CD4-positive, alpha-beta memory T cell (primary cell): ENCODE measurements at regions of chr15 and their contacts with region 1.

Region 1: GRCh38 chr15:40906091-40906990 is 12.1 kb downstream of the VPS18 start:
- DNase-seq: peak; percentile 64 to 68 (median 64)
- H3K4me3 ChIP-seq: peak overlapping the region; percentile 61 to 67
- H3K4me3 Mint-ChIP-seq: peak overlapping the region; percentile 42 to 88 (median 84)
- H3K27ac ChIP-seq: peak overlapping the region; percentile 58
- H3K27ac Mint-ChIP-seq: peak overlapping the region in 5 of 7 donors; percentile 70 to 91 (median 87)
- H3K4me1 ChIP-seq: peaks cover 20% of the 10 kb centered on the region
- H3K4me1 Mint-ChIP-seq: peaks cover 13 to 35% (median 24%) of the 10 kb centered on the region in 4 donors
- H3K27me3 ChIP-seq: no peaks in the 10 kb centered on the region
- H3K27me3 Mint-ChIP-seq: no peaks in the 10 kb centered on the region

Region 2: GRCh38 chr15:40536501-40536900 is 369.8 kb before region 1 on chr15:
- CTCF ChIA-PET with region 1: no interaction called
- POLR2A ChIA-PET with region 1: no interaction called
- intact Hi-C with region 1: no loop called
- DNase-seq: no peak
- H3K4me3 ChIP-seq: no peak overlapping the region
- H3K4me3 Mint-ChIP-seq: no peak overlapping the region
- H3K27ac ChIP-seq: no peak overlapping the region
- H3K27ac Mint-ChIP-seq: peak overlapping the region in 1 of 7 donors; percentile 42
- H3K4me1 ChIP-seq: no peaks in the 10 kb centered on the region
- H3K4me1 Mint-ChIP-seq: peaks cover 0 to 2% (median 0%) of the 10 kb centered on the region in 4 donors
- H3K27me3 ChIP-seq: no peaks in the 10 kb centered on the region
- H3K27me3 Mint-ChIP-seq: no peaks in the 10 kb centered on the region

Region 3: DNA sequence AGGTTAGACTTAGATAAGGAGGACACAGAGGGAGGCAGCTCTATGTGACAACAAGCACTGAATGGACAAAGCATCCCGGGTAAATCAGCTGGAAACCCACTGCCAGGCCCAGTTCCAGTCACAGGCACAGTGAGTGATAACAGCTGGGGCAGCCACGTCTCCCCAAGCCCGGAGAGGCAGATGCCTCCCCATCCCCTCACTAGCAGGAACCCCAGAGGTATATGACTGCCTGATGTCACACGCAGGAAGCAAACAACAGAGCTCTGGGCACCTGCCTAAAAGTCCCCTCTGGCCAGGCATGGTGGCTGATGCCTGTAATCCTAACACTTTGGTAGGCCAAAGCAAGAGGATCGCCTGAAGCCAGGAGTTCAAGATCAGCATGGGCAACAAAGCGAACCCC is 118.3 kb before region 1 on chr15:
- CTCF ChIA-PET with region 1: no interaction called
- POLR2A ChIA-PET with region 1: no interaction called
- intact Hi-C with region 1: no loop called
- DNase-seq: no peak
- H3K4me3 ChIP-seq: no peak overlapping the region
- H3K4me3 Mint-ChIP-seq: peak overlapping the region in 3 of 8 donors; percentile 45 to 68 (median 53)
- H3K27ac ChIP-seq: no peak overlapping the region
- H3K27ac Mint-ChIP-seq: peak overlapping the region in 3 of 7 donors; percentile 12 to 83 (median 75)
- H3K4me1 ChIP-seq: peaks cover 23% of the 10 kb centered on the region
- H3K4me1 Mint-ChIP-seq: peaks cover 20 to 34% (median 25%) of the 10 kb centered on the region in 4 donors
- H3K27me3 ChIP-seq: no peaks in the 10 kb centered on the region
- H3K27me3 Mint-ChIP-seq: no peaks in the 10 kb centered on the region

Region 4: GRCh38 chr15:40928821-40929659 is 22.7 kb after region 1 on chr15 and contains the start of gene DLL4:
- CTCF ChIA-PET with region 1: interaction called, 7 read pairs
- POLR2A ChIA-PET with region 1: interaction called, 4 read pairs
- intact Hi-C with region 1: loop called (anchors 2 kb)
- DNase-seq: peak in 4 of 5 donors; percentile 21 to 49 (median 38)
- H3K4me3 ChIP-seq: peak within 1 kb of the TSS; percentile 42 to 57
- H3K4me3 Mint-ChIP-seq: peak within 1 kb of the TSS; percentile 77 to 92 (median 84)
- H3K27ac ChIP-seq: no peak within 1 kb of the TSS
- H3K27ac Mint-ChIP-seq: peak within 1 kb of the TSS in 1 of 7 donors; percentile 65
- H3K4me1 ChIP-seq: peaks cover 52% of the 10 kb centered on the region
- H3K4me1 Mint-ChIP-seq: peaks cover 23 to 62% (median 34%) of the 10 kb centered on the region in 4 donors
- H3K27me3 ChIP-seq: peaks cover 33% of the 10 kb centered on the region
- H3K27me3 Mint-ChIP-seq: peaks cover 46 to 54% of the 10 kb centered on the region in 2 donors
- total RNA-seq, gene DLL4: not detected

Region 5: GRCh38 chr15:41022487-41023090 is 116.2 kb after region 1 on chr15:
- CTCF ChIA-PET with region 1: interaction called, 81 read pairs
- POLR2A ChIA-PET with region 1: interaction called, 3 read pairs
- intact Hi-C with region 1: loop called (anchors 1 kb)
- DNase-seq: peak; percentile 33 to 59 (median 37)
- H3K4me3 ChIP-seq: no peak overlapping the region
- H3K4me3 Mint-ChIP-seq: no peak overlapping the region
- H3K27ac ChIP-seq: no peak overlapping the region
- H3K27ac Mint-ChIP-seq: peak overlapping the region in 1 of 7 donors; percentile 29
- H3K4me1 ChIP-seq: no peaks in the 10 kb centered on the region
- H3K4me1 Mint-ChIP-seq: peaks cover 1 to 7% (median 2%) of the 10 kb centered on the region in 4 donors
- H3K27me3 ChIP-seq: no peaks in the 10 kb centered on the region
- H3K27me3 Mint-ChIP-seq: no peaks in the 10 kb centered on the region

Region 6: GRCh38 chr15:41043276-41043951 is 137.1 kb after region 1 on chr15:
- CTCF ChIA-PET with region 1: no interaction called
- POLR2A ChIA-PET with region 1: no interaction called
- intact Hi-C with region 1: no loop called
- DNase-seq: no peak
- H3K4me3 ChIP-seq: no peak overlapping the region
- H3K4me3 Mint-ChIP-seq: no peak overlapping the region
- H3K27ac ChIP-seq: no peak overlapping the region
- H3K27ac Mint-ChIP-seq: peak overlapping the region in 1 of 7 donors; percentile 68
- H3K4me1 ChIP-seq: no peaks in the 10 kb centered on the region
- H3K4me1 Mint-ChIP-seq: peaks cover 0 to 7% (median 3%) of the 10 kb centered on the region in 4 donors
- H3K27me3 ChIP-seq: no peaks in the 10 kb centered on the region
- H3K27me3 Mint-ChIP-seq: no peaks in the 10 kb centered on the region

Region 7: GRCh38 chr15:41180206-41180789 is 274.0 kb after region 1 on chr15:
- CTCF ChIA-PET with region 1: interaction called, 4 read pairs
- POLR2A ChIA-PET with region 1: no interaction called
- intact Hi-C with region 1: loop called (anchors 1 kb)
- DNase-seq: no peak
- H3K4me3 ChIP-seq: no peak overlapping the region
- H3K4me3 Mint-ChIP-seq: no peak overlapping the region
- H3K27ac ChIP-seq: no peak overlapping the region
- H3K27ac Mint-ChIP-seq: no peak overlapping the region
- H3K4me1 ChIP-seq: no peaks in the 10 kb centered on the region
- H3K4me1 Mint-ChIP-seq: no peaks in the 10 kb centered on the region
- H3K27me3 ChIP-seq: no peaks in the 10 kb centered on the region
- H3K27me3 Mint-ChIP-seq: peaks cover 0 to 2% of the 10 kb centered on the region in 2 donors

Region 8: GRCh38 chr15:41331833-41332787 is 425.8 kb after region 1 on chr15 and contains the start of gene OIP5:
- CTCF ChIA-PET with region 1: interaction called, 3 read pairs
- POLR2A ChIA-PET with region 1: interaction called, 3 read pairs
- intact Hi-C with region 1: loop called (anchors 5 kb)
- DNase-seq: peak; percentile 97 to 100 (median 99)
- H3K4me3 ChIP-seq: peak within 1 kb of the TSS; percentile 88 to 89
- H3K4me3 Mint-ChIP-seq: peak within 1 kb of the TSS; percentile 97 to 100 (median 99)
- H3K27ac ChIP-seq: peak within 1 kb of the TSS; percentile 67
- H3K27ac Mint-ChIP-seq: peak within 1 kb of the TSS; percentile 79 to 98 (median 95)
- H3K4me1 ChIP-seq: peaks cover 32% of the 10 kb centered on the region
- H3K4me1 Mint-ChIP-seq: peaks cover 16 to 45% (median 29%) of the 10 kb centered on the region in 4 donors
- H3K27me3 ChIP-seq: no peaks in the 10 kb centered on the region
- H3K27me3 Mint-ChIP-seq: no peaks in the 10 kb centered on the region
- total RNA-seq, gene OIP5: 0.52 to 0.72 TPM